B cell (primary cell): ENCODE measurements at regions of chr1 and their contacts with region 1.

Region 1: GRCh38 chr1:247390116-247390791 is 25.7 kb upstream of the NLRP3 start:
- DNase-seq: peak; percentile 93
- ATAC-seq: peak; percentile 99
- H3K4me3 ChIP-seq: peak overlapping the region in 4 of 5 experiments; percentile 7 to 33 (median 12)
- H3K4me3 Mint-ChIP-seq: peak overlapping the region; percentile 76
- H3K27ac ChIP-seq: peak overlapping the region; percentile 38 to 60
- H3K27ac Mint-ChIP-seq: peak overlapping the region; percentile 85
- H3K4me1 ChIP-seq: peaks cover 15 to 18% of the 10 kb centered on the region in 2 donors
- H3K4me1 Mint-ChIP-seq: peaks cover 16% of the 10 kb centered on the region
- H3K27me3 ChIP-seq: no peaks in the 10 kb centered on the region
- H3K27me3 Mint-ChIP-seq: no peaks in the 10 kb centered on the region
- CTCF ChIP-seq: peak; percentile 92

Region 2: DNA sequence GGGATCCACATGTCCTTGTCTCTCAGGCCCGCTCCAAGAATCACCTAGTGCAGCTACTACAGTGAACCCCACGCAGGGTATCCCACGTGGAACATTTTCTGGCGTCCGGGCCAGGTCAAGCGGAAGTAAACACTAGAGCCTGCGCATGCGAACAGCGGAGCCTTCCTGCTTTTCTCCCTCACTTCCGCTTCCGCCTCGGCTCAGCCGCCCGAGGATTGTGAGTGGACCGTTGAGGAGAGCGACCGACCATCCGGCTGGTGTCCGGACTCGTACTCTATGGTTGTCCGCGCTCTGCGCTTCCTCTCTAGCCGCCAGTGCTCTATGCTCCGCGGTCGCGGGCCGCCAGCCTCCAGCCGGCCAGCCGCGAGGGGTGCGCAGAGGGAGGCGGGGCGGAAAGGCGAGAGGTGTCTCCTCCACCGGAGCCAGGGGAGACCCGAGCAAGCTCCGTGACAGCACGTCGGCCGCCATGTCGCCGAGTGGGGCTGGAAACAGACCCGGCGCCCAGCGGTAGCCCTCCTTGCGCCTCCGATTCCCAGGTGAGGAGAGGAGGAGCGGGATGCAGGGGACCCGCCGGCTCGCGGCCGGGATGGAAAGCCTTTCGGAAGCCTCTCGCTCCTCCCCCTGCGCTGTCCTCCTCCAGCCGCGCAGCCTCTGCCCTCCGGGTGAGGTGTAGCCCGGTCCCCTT is 824.0 kb before region 1 on chr1 and contains the starts of genes CNST and TFB2M:
- CTCF ChIA-PET with region 1: no interaction called
- POLR2A ChIA-PET with region 1: no interaction called
- intact Hi-C with region 1: loop called (anchors 2 kb)
- DNase-seq: peak; percentile 98
- ATAC-seq: peak; percentile 90
- H3K4me3 ChIP-seq: peak within 1 kb of the TSS; percentile 70 to 100 (median 95)
- H3K4me3 Mint-ChIP-seq: peak within 1 kb of the TSS; percentile 98
- H3K27ac ChIP-seq: peak within 1 kb of the TSS; percentile 83 to 95
- H3K27ac Mint-ChIP-seq: peak within 1 kb of the TSS; percentile 94
- H3K4me1 ChIP-seq: peaks cover 50 to 53% of the 10 kb centered on the region in 2 donors
- H3K4me1 Mint-ChIP-seq: peaks cover 45% of the 10 kb centered on the region
- H3K27me3 ChIP-seq: no peaks in the 10 kb centered on the region
- H3K27me3 Mint-ChIP-seq: no peaks in the 10 kb centered on the region
- CTCF ChIP-seq: no peak
- total RNA-seq, gene CNST: 54.0 and 54.6 TPM in 2 replicates
- total RNA-seq, gene TFB2M: 11.6 and 14.7 TPM in 2 replicates

Region 3: DNA sequence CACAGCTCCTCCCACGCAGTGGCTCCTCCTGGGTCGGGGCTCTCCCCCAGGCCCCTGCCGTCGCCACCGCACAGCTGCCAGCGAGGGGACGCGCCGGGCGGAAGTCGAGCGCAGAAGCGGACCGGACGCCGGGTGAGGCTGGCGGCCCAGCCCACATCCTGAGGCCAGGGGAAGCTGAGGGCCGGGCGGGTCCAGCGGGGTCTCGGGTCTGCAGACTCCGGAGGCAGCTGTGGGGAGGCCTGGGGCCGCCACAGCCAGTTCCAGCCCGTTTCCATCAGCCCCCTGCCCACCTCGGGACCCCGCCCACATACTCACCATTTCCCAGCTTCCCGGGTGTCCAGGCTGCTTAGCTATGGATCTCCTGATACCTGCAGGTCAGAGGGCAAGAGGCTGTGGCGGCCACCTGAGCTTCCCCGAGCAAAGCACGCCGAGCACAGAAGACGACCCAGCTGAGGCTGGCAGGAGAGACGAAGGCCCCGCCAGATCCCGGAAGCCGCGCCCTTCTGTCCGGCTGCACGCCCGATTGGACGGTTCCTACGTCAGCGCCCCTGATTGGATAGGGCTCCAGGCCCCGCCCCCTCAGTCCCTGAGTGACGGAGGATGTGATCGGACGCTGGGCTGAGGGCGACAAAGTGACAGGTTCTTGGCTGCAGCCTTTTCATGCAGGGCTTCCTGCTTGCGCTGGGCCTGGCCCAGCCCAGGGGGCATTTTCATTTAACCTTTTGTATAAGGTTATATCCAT is 179.7 kb before region 1 on chr1:
- CTCF ChIA-PET with region 1: no interaction called
- POLR2A ChIA-PET with region 1: no interaction called
- intact Hi-C with region 1: loop called (anchors 2 kb)
- DNase-seq: peak; percentile 96
- ATAC-seq: peak; percentile 99
- H3K4me3 ChIP-seq: peak overlapping the region; percentile 72 to 91 (median 79)
- H3K4me3 Mint-ChIP-seq: peak overlapping the region; percentile 95
- H3K27ac ChIP-seq: peak overlapping the region; percentile 85 to 87
- H3K27ac Mint-ChIP-seq: peak overlapping the region; percentile 96
- H3K4me1 ChIP-seq: peaks cover 38 to 41% of the 10 kb centered on the region in 2 donors
- H3K4me1 Mint-ChIP-seq: peaks cover 58% of the 10 kb centered on the region
- H3K27me3 ChIP-seq: no peaks in the 10 kb centered on the region
- H3K27me3 Mint-ChIP-seq: no peaks in the 10 kb centered on the region
- CTCF ChIP-seq: no peak

Region 4: DNA sequence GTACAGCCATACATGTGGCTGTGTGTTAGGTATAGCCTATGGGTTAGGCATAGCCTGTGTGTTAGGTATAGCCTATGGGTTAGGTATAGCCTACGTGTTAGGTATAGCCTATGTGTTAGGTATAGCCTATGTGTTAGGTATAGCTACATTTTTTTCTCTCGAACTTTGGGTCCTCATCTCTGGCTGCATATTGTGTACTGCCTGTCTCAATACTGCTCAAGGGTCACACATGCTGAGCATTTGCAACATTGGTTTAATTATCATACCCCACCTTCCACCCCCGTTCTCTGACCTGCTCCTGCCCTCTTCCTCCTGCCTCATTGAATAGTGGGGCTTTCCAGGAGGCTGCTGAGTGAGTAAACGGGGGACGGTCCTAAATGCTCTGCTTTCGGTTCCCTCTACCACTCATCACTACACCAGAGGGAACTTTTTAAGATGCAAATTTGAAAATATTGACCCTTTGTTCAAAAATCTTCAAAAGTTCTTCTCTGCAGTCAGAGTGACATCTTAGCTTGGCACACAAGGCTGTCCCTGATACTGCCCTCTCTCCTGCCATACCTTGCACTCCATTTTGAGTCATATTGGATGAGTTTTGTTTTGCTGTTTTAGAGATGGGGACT is 49.9 kb after region 1 on chr1:
- CTCF ChIA-PET with region 1: interaction called, 55 read pairs
- POLR2A ChIA-PET with region 1: interaction called, 7 read pairs
- intact Hi-C with region 1: loop called (anchors 1 kb)
- DNase-seq: peak; percentile 84
- ATAC-seq: peak; percentile 97
- H3K4me3 ChIP-seq: peak overlapping the region in 1 of 5 experiments; percentile 18
- H3K4me3 Mint-ChIP-seq: peak overlapping the region; percentile 44
- H3K27ac ChIP-seq: peak overlapping the region; percentile 52
- H3K27ac Mint-ChIP-seq: peak overlapping the region; percentile 47
- H3K4me1 ChIP-seq: peaks cover 39 to 46% of the 10 kb centered on the region in 2 donors
- H3K4me1 Mint-ChIP-seq: peaks cover 55% of the 10 kb centered on the region
- H3K27me3 ChIP-seq: no peaks in the 10 kb centered on the region
- H3K27me3 Mint-ChIP-seq: no peaks in the 10 kb centered on the region
- CTCF ChIP-seq: no peak

Region 5: DNA sequence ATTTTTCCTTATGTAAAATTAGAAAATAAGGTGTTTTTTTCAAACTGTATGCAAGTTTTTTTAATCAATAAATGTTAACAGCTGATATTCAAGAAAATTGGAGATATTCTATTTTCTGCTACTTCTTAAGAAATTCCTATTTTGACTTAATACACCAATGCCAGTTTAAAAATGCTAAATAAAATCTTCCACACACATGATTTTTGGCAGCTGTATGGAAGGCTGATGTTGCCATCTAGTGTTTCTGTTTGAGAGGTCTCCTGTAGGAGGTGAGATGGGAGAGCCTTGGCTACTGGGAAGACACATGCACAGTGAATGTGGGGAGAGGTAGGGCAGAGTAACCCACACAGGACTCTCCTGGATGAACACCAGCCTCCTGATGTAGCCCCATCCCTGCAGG is 96.8 kb after region 1 on chr1:
- CTCF ChIA-PET with region 1: interaction called, 238 read pairs
- POLR2A ChIA-PET with region 1: no interaction called
- intact Hi-C with region 1: loop called (anchors 1 kb)
- DNase-seq: peak; percentile 66
- ATAC-seq: peak; percentile 80
- H3K4me3 ChIP-seq: no peak overlapping the region
- H3K4me3 Mint-ChIP-seq: no peak overlapping the region
- H3K27ac ChIP-seq: no peak overlapping the region
- H3K27ac Mint-ChIP-seq: no peak overlapping the region
- H3K4me1 ChIP-seq: no peaks in the 10 kb centered on the region
- H3K4me1 Mint-ChIP-seq: no peaks in the 10 kb centered on the region
- H3K27me3 ChIP-seq: peaks cover 0 to 5% (median 0%) of the 10 kb centered on the region in 4 experiments
- H3K27me3 Mint-ChIP-seq: peaks cover 8% of the 10 kb centered on the region
- CTCF ChIP-seq: peak; percentile 82